CD8-positive, alpha-beta T cell (primary cell): ENCODE measurements at regions of chr12 and their contacts with region 1.

Region 1: GRCh38 chr12:51217968-51218606 is at the start of gene POU6F1:
- DNase-seq: peak; percentile 36 to 89 (median 66)
- ATAC-seq: peak; percentile 82
- H3K4me3 ChIP-seq: peak within 1 kb of the TSS; percentile 96
- H3K4me3 Mint-ChIP-seq: peak within 1 kb of the TSS; percentile 93
- H3K27ac ChIP-seq: peak within 1 kb of the TSS; percentile 88 to 92
- H3K27ac Mint-ChIP-seq: peak within 1 kb of the TSS; percentile 97
- H3K4me1 ChIP-seq: peaks cover 19% of the 10 kb centered on the region
- H3K4me1 Mint-ChIP-seq: peaks cover 24% of the 10 kb centered on the region
- H3K27me3 ChIP-seq: no peaks in the 10 kb centered on the region
- H3K27me3 Mint-ChIP-seq: no peaks in the 10 kb centered on the region
- CTCF ChIP-seq: peak; percentile 64
- total RNA-seq, gene POU6F1: 21.2 to 21.4 TPM

Region 2: GRCh38 chr12:50825372-50825838 is 392.7 kb before region 1 on chr12:
- CTCF ChIA-PET with region 1: no interaction called
- POLR2A ChIA-PET with region 1: no interaction called
- intact Hi-C with region 1: loop called in 1 of 2 experiments (anchors 10 kb)
- DNase-seq: peak in 2 of 9 experiments; percentile 67 to 81
- ATAC-seq: peak; percentile 92
- H3K4me3 ChIP-seq: no peak overlapping the region
- H3K4me3 Mint-ChIP-seq: no peak overlapping the region
- H3K27ac ChIP-seq: peak overlapping the region; percentile 6 to 26
- H3K27ac Mint-ChIP-seq: peak overlapping the region; percentile 87
- H3K4me1 ChIP-seq: no peaks in the 10 kb centered on the region
- H3K4me1 Mint-ChIP-seq: peaks cover 7% of the 10 kb centered on the region
- H3K27me3 ChIP-seq: no peaks in the 10 kb centered on the region
- H3K27me3 Mint-ChIP-seq: no peaks in the 10 kb centered on the region
- CTCF ChIP-seq: peak; percentile 67

Region 3: DNA sequence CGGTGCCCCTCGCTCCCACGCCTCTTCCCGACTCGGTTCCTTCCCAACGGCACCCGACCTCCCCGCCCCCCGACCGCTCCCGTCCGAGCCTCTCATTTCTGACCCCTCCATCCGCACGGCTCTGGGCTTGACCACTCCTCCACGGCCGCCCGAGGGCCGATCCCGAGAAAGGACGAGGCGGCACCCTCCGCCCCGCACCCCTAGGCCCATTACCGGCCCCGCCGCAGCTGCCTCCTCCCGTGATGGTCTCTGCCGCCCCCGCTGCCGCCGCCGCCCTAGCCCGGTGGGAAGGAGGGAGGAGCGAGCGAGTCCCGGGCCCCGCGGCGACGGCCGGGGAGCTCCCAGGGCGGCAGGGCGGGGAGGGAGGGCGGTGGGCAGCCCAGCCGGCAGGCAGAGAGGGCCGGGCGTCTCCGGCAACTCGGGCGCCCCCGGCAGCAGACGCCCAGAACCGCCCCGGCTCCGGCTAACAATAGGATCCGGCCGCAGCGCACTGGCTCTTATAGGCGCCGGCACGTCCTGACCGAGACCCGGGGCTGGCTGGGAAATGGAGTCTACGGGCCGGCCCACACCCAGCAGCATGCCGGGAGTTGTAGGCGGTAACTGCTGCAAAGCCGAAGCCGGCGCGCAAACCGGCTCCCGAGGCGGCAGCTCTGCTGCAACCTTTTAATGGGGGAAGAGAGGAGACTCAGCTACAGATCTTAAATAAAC is 134.8 kb before region 1 on chr12 and contains the start of gene CSRNP2:
- CTCF ChIA-PET with region 1: no interaction called
- POLR2A ChIA-PET with region 1: interaction called, 16 read pairs
- intact Hi-C with region 1: loop called in 1 of 2 experiments (anchors 5 kb)
- DNase-seq: peak; percentile 90 to 97 (median 94)
- ATAC-seq: peak; percentile 99
- H3K4me3 ChIP-seq: peak within 1 kb of the TSS; percentile 88
- H3K4me3 Mint-ChIP-seq: peak within 1 kb of the TSS; percentile 94
- H3K27ac ChIP-seq: peak within 1 kb of the TSS; percentile 61 to 62
- H3K27ac Mint-ChIP-seq: peak within 1 kb of the TSS; percentile 91
- H3K4me1 ChIP-seq: peaks cover 12% of the 10 kb centered on the region
- H3K4me1 Mint-ChIP-seq: peaks cover 36% of the 10 kb centered on the region
- H3K27me3 ChIP-seq: no peaks in the 10 kb centered on the region
- H3K27me3 Mint-ChIP-seq: no peaks in the 10 kb centered on the region
- CTCF ChIP-seq: no peak
- total RNA-seq, gene CSRNP2: 19.5 to 19.9 TPM

Region 4: GRCh38 chr12:51127050-51127729 is 90.9 kb before region 1 on chr12:
- CTCF ChIA-PET with region 1: no interaction called
- POLR2A ChIA-PET with region 1: no interaction called
- intact Hi-C with region 1: no loop called
- DNase-seq: no peak
- ATAC-seq: no peak
- H3K4me3 ChIP-seq: no peak overlapping the region
- H3K4me3 Mint-ChIP-seq: no peak overlapping the region
- H3K27ac ChIP-seq: no peak overlapping the region
- H3K27ac Mint-ChIP-seq: peak overlapping the region; percentile 19
- H3K4me1 ChIP-seq: no peaks in the 10 kb centered on the region
- H3K4me1 Mint-ChIP-seq: peaks cover 3% of the 10 kb centered on the region
- H3K27me3 ChIP-seq: no peaks in the 10 kb centered on the region
- H3K27me3 Mint-ChIP-seq: no peaks in the 10 kb centered on the region
- CTCF ChIP-seq: no peak

Region 5: DNA sequence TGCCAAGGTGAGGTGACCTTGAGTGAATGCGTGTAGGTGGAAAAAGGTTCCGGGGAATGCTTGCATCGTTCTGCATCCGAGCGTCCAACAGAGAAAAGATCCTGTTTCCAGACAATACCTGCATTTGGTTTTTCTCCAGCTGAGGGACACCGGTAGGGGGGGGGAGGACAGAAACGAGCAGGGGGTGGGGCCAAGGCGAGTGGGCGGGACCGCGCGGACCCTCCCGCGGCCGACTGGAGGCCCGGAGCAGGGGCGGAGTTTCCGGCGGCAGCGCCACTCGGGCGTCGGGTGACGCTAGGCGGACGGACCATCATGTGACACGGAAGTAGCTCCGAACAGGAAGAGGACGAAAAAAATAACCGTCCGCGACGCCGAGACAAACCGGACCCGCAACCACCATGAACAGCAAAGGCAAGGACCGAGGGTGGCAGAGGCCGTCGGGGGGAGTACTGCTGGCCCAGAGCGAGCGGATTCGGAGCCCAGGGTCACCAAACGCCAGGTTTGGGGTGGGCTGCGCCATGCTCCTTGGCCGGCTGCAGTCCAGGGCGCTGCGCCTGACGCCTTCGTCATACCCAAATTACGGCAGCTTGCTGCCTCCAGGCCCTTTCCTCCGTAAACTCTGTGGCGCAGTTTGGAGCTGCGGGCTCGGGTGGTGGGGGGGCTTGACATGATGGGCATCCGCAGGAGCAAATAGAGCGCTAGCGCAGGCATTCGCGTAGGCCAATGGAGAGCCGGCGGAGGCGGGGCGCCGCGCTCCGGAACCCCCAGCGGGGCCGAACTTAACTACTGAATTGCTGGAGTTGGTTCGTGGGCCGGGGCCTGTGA is 20.6 kb after region 1 on chr12 and contains the start of gene DAZAP2:
- CTCF ChIA-PET with region 1: interaction called, 17 read pairs
- POLR2A ChIA-PET with region 1: interaction called, 101 read pairs
- intact Hi-C with region 1: loop called (anchors 1 kb)
- DNase-seq: peak; percentile 89 to 98 (median 96)
- ATAC-seq: peak; percentile 88
- H3K4me3 ChIP-seq: peak within 1 kb of the TSS; percentile 80 to 99
- H3K4me3 Mint-ChIP-seq: peak within 1 kb of the TSS; percentile 94
- H3K27ac ChIP-seq: peak within 1 kb of the TSS; percentile 97 to 100
- H3K27ac Mint-ChIP-seq: peak within 1 kb of the TSS; percentile 100
- H3K4me1 ChIP-seq: peaks cover 32% of the 10 kb centered on the region
- H3K4me1 Mint-ChIP-seq: peaks cover 45% of the 10 kb centered on the region
- H3K27me3 ChIP-seq: no peaks in the 10 kb centered on the region
- H3K27me3 Mint-ChIP-seq: no peaks in the 10 kb centered on the region
- CTCF ChIP-seq: no peak
- total RNA-seq, gene DAZAP2: 340 to 343 TPM

Region 6: DNA sequence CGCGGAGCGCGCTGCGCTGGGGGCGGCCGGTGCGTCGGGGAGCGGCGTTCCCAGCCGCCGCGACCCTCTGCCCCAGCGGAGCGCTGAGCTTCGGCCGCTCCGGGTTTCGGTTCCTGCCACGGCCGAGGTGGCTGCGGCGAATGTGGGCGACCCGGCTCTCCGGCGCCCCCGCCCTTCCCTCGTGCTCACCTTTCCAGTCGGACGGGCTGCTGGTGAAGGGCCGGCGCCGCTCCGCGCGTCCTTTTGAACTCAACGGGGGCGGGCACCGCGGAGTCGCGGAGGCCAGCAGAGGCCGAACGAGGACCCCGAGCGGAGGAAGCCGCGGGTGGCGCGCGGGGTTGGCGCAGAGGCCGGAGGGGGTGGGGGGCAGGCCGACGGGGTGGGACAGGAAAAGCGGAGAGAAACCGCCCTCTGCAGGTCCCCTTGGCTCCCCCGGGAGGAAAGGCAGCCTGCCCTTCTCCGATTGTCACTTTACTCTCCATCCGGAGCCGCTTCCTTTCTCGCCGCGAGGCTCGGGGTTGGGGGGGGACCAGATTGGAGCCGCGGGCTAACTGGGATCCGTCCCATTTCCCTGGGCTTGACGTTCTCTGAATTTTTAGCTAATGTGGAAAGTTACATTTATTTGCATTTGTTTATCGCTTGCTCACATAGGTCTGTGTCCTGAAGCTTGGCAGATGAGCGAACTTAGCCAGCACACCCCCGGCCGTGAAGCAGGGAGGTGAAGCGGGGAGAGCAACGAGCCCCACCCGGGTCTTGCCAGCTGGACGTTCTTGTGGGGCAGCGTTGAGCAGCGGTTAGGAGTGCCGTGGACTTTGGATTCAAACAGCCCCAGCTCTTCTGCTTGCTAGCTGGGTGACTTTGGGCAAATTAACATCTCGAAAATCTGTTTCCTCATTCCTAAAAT is 52.2 kb after region 1 on chr12 and contains the start of gene SMAGP:
- CTCF ChIA-PET with region 1: interaction called, 3 read pairs
- POLR2A ChIA-PET with region 1: interaction called, 4 read pairs
- intact Hi-C with region 1: loop called in 1 of 2 experiments (anchors 2 kb)
- DNase-seq: peak in 8 of 9 experiments; percentile 28 to 76 (median 52)
- ATAC-seq: peak; percentile 50
- H3K4me3 ChIP-seq: peak within 1 kb of the TSS; percentile 54 to 71
- H3K4me3 Mint-ChIP-seq: peak within 1 kb of the TSS; percentile 90
- H3K27ac ChIP-seq: peak within 1 kb of the TSS; percentile 42 to 58
- H3K27ac Mint-ChIP-seq: peak within 1 kb of the TSS; percentile 84
- H3K4me1 ChIP-seq: peaks cover 16% of the 10 kb centered on the region
- H3K4me1 Mint-ChIP-seq: peaks cover 23% of the 10 kb centered on the region
- H3K27me3 ChIP-seq: no peaks in the 10 kb centered on the region
- H3K27me3 Mint-ChIP-seq: no peaks in the 10 kb centered on the region
- CTCF ChIP-seq: no peak
- total RNA-seq, gene SMAGP: 1.9 to 2.3 TPM

Region 7: GRCh38 chr12:51326762-51327439 is 108.8 kb after region 1 on chr12:
- CTCF ChIA-PET with region 1: interaction called, 4 read pairs
- POLR2A ChIA-PET with region 1: no interaction called
- intact Hi-C with region 1: loop called in 1 of 2 experiments (anchors 5 kb)
- DNase-seq: peak in 2 of 9 experiments; percentile 17 to 49
- ATAC-seq: no peak
- H3K4me3 ChIP-seq: no peak overlapping the region
- H3K4me3 Mint-ChIP-seq: peak overlapping the region; percentile 35
- H3K27ac ChIP-seq: peak overlapping the region in 1 of 2 experiments; percentile 56
- H3K27ac Mint-ChIP-seq: peak overlapping the region; percentile 91
- H3K4me1 ChIP-seq: peaks cover 63% of the 10 kb centered on the region
- H3K4me1 Mint-ChIP-seq: peaks cover 77% of the 10 kb centered on the region
- H3K27me3 ChIP-seq: no peaks in the 10 kb centered on the region
- H3K27me3 Mint-ChIP-seq: no peaks in the 10 kb centered on the region
- CTCF ChIP-seq: no peak

Region 8: GRCh38 chr12:51752234-51752889 is 534.3 kb after region 1 on chr12:
- CTCF ChIA-PET with region 1: no interaction called
- POLR2A ChIA-PET with region 1: no interaction called
- intact Hi-C with region 1: no loop called
- DNase-seq: no peak
- ATAC-seq: no peak
- H3K4me3 ChIP-seq: no peak overlapping the region
- H3K4me3 Mint-ChIP-seq: no peak overlapping the region
- H3K27ac ChIP-seq: no peak overlapping the region
- H3K27ac Mint-ChIP-seq: no peak overlapping the region
- H3K4me1 ChIP-seq: no peaks in the 10 kb centered on the region
- H3K4me1 Mint-ChIP-seq: no peaks in the 10 kb centered on the region
- H3K27me3 ChIP-seq: no peaks in the 10 kb centered on the region
- H3K27me3 Mint-ChIP-seq: no peaks in the 10 kb centered on the region
- CTCF ChIP-seq: no peak

Region 9: GRCh38 chr12:52821826-52822660 is 1604.0 kb after region 1 on chr12:
- CTCF ChIA-PET with region 1: no interaction called
- POLR2A ChIA-PET with region 1: no interaction called
- intact Hi-C with region 1: no loop called
- DNase-seq: no peak
- ATAC-seq: no peak
- H3K4me3 ChIP-seq: no peak overlapping the region
- H3K4me3 Mint-ChIP-seq: no peak overlapping the region
- H3K27ac ChIP-seq: no peak overlapping the region
- H3K27ac Mint-ChIP-seq: no peak overlapping the region
- H3K4me1 ChIP-seq: peaks cover 13% of the 10 kb centered on the region
- H3K4me1 Mint-ChIP-seq: peaks cover 15% of the 10 kb centered on the region
- H3K27me3 ChIP-seq: no peaks in the 10 kb centered on the region
- H3K27me3 Mint-ChIP-seq: no peaks in the 10 kb centered on the region
- CTCF ChIP-seq: no peak